Common myeloid progenitor, CD34-positive (primary cell): ENCODE measurements at regions of chr1 and their contacts with region 1.

Region 1: GRCh38 chr1:201119206-201120197 is 7.3 kb upstream of the CACNA1S start:
- DNase-seq: peak; percentile 52 to 74 (median 71)
- H3K4me3 ChIP-seq: no peak overlapping the region
- H3K27ac ChIP-seq: no peak overlapping the region
- H3K4me1 ChIP-seq: peaks cover 0 to 17% (median 11%) of the 10 kb centered on the region in 4 experiments
- H3K27me3 ChIP-seq: peaks cover 0 to 21% (median 16%) of the 10 kb centered on the region in 5 experiments

Region 2: DNA sequence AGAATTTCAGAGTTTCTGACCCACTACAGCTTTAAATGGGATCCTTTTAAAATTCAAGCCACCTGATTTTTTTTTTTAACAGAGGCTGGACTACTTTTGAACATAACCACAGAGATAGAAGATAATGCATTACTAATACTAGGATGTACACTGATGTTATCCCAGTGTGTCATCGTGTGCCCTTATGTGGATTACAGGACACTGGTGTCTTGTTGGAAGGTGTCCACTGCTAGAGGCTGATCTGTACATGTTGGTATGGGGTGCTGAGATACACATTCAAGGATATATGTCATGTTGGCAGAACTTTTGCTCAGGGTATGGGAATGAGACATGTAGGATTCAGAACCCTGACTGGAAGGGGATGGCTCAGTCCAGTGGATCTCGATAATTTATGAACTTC is 168.5 kb before region 1 on chr1:
- CTCF ChIA-PET with region 1: no interaction called
- POLR2A ChIA-PET with region 1: no interaction called
- DNase-seq: no peak
- H3K4me3 ChIP-seq: no peak overlapping the region
- H3K27ac ChIP-seq: no peak overlapping the region
- H3K4me1 ChIP-seq: no peaks in the 10 kb centered on the region
- H3K27me3 ChIP-seq: no peaks in the 10 kb centered on the region

Region 3: DNA sequence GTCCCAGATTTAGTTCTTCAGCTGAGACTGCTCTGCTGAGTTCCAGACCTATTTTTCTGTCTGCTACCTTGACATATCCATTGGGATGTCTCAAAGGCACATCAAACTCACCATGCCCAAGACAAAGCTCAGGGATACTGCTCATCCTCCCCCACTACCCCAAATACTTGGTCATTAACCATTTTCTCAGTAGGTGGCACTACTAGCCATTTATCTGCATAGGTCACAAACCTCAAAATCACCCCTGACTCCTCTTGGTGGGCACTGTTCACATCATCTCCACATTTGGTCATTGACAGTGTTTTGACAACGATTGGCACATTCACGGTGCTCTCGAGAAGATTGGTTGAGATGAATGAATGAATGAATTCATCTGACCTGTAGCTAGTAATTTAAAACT is 39.4 kb before region 1 on chr1:
- CTCF ChIA-PET with region 1: interaction called, 59 read pairs
- POLR2A ChIA-PET with region 1: no interaction called
- DNase-seq: peak in 2 of 3 donors; percentile 8 to 14
- H3K4me3 ChIP-seq: no peak overlapping the region
- H3K27ac ChIP-seq: no peak overlapping the region
- H3K4me1 ChIP-seq: no peaks in the 10 kb centered on the region
- H3K27me3 ChIP-seq: peaks cover 0 to 10% (median 0%) of the 10 kb centered on the region in 5 experiments

Region 4: GRCh38 chr1:201085916-201086735 is 33.4 kb before region 1 on chr1:
- CTCF ChIA-PET with region 1: interaction called, 59 read pairs
- POLR2A ChIA-PET with region 1: no interaction called
- DNase-seq: peak; percentile 45 to 72 (median 68)
- H3K4me3 ChIP-seq: no peak overlapping the region
- H3K27ac ChIP-seq: no peak overlapping the region
- H3K4me1 ChIP-seq: no peaks in the 10 kb centered on the region
- H3K27me3 ChIP-seq: peaks cover 0 to 10% (median 0%) of the 10 kb centered on the region in 5 experiments

Region 5: DNA sequence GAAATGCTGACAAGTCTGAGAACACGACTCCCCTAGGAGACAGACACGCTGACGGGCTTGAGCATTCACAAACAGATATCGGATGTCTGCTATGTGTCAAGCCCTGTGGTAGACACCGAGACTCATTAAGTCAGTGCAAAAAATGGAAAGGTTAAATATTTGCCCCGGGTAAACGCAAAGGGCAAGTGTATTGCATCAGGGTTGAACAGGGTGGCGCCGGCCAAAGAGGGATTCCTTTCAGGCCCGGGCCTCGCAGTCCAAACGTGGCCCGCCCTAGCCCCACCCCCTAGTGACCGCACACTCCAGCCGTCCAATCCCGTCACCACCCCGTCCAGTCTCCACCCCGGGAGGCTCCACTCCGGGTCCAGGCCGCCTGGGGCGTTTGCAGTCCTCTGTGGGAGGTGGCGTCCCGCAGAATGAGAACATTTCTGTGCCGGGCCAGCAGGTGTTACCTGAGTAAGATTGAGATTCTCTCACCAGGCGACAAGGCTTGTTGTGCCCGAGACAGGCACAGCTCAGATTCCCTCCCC is 51.1 kb after region 1 on chr1:
- CTCF ChIA-PET with region 1: no interaction called
- POLR2A ChIA-PET with region 1: no interaction called
- DNase-seq: peak; percentile 82 to 93 (median 88)
- H3K4me3 ChIP-seq: peak overlapping the region; percentile 24 to 87 (median 72)
- H3K27ac ChIP-seq: peak overlapping the region in 1 of 2 experiments; percentile 43
- H3K4me1 ChIP-seq: peaks cover 0 to 13% (median 8%) of the 10 kb centered on the region in 4 experiments
- H3K27me3 ChIP-seq: peaks cover 0 to 22% (median 0%) of the 10 kb centered on the region in 5 experiments

Region 6: GRCh38 chr1:201191653-201192260 is 72.3 kb after region 1 on chr1:
- CTCF ChIA-PET with region 1: no interaction called
- POLR2A ChIA-PET with region 1: no interaction called
- DNase-seq: peak in 1 of 3 donors; percentile 6
- H3K4me3 ChIP-seq: no peak overlapping the region
- H3K27ac ChIP-seq: no peak overlapping the region
- H3K4me1 ChIP-seq: no peaks in the 10 kb centered on the region
- H3K27me3 ChIP-seq: peaks cover 0 to 22% (median 9%) of the 10 kb centered on the region in 5 experiments